ENCODE measurements at regions of chr10 and their contacts with region 1.

Region 1: GRCh38 chr10:15097011-15097812 is at the start of gene RPP38:
- DNase-seq: peak; percentile 85
- ATAC-seq: peak; percentile 85
- H3K4me3 ChIP-seq: peak within 1 kb of the TSS; percentile 94
- H3K27ac ChIP-seq: peak within 1 kb of the TSS; percentile 94
- H3K4me1 ChIP-seq: no peaks in the 10 kb centered on the region; the same call in 1 of the 2 replicates
- H3K27me3 ChIP-seq: no peaks in the 10 kb centered on the region
- CTCF ChIP-seq: no peak
- total RNA-seq, gene RPP38: 8.5 and 9.9 TPM in 2 replicates

Region 2: DNA sequence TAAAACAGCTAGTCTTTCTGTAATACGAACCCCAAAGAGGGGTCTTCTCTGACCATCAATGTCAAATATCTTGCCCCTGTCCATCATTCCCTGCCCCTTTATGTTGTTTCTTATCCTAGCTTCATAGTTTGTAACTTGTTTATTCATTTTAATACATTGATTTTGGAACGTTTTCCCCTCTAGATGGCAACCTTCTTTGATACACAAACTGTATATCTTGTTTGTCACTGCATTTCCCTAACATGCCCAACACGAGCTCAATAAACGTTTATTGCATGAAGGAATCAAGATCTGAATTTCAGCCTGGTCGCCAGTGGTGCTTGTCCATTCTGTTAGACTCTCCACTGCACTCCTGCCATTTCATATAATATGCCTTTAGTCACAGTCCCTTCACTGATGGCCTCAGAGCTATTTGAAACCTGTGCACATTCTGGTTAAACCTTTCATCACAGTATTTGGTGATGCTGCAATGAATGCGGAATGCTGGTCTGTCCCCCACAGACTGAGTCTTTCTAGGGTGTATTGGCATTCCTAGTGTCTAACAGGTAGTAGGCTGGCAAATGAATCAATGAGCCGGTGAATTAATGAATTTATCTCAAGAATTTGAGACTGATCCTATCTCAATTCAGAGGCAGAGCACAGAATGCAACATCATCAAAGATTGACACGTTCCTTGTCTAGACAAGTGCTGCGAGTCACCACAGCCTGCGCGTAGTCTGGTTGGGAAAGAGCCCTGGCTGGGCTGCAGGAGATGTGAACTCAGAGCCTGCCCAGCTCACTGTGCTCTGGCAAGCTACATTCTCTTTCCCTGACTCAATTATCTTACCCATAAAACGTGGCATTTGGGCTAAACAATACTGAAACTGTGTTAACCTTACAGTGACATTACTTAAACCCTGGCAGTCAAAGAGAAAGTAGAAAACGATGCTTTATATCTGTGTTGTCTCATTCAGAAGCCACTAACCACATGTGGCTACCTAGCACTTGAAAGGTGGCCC is 711.3 kb before region 1 on chr10:
- CTCF ChIA-PET with region 1: interaction called, 11 read pairs
- POLR2A ChIA-PET with region 1: no interaction called
- intact Hi-C with region 1: no loop called
- DNase-seq: peak; percentile 36
- ATAC-seq: no peak
- H3K4me3 ChIP-seq: no peak overlapping the region
- H3K27ac ChIP-seq: no peak overlapping the region
- H3K4me1 ChIP-seq: no peaks in the 10 kb centered on the region
- H3K27me3 ChIP-seq: no peaks in the 10 kb centered on the region
- CTCF ChIP-seq: no peak; the same call in 1 of the 2 replicates

Region 3: GRCh38 chr10:14926722-14927416 is 170.3 kb before region 1 on chr10:
- CTCF ChIA-PET with region 1: no interaction called
- POLR2A ChIA-PET with region 1: no interaction called
- intact Hi-C with region 1: no loop called
- DNase-seq: no peak
- ATAC-seq: no peak
- H3K4me3 ChIP-seq: no peak overlapping the region
- H3K27ac ChIP-seq: no peak overlapping the region
- H3K4me1 ChIP-seq: no peaks in the 10 kb centered on the region
- H3K27me3 ChIP-seq: no peaks in the 10 kb centered on the region
- CTCF ChIP-seq: no peak

Region 4: DNA sequence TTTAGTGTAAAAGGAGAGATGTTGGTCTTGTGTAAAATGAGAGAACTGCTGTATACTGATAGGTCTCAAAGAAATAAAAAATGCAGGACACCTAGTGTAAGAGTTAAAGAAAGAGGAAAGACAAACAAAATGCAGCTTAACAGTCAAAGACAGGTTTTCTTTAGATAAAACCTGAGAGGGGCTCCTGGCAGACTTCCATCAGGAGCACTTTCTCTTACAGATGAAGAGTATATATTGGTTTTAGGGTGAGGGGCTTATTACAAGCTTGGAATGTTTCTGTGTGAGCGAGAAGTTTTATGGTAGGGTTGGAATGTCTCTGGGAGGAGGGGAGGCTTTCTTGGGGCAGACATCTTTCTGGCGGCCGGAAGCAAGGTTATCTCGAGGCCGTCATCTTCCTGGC is 24.9 kb before region 1 on chr10:
- CTCF ChIA-PET with region 1: no interaction called
- POLR2A ChIA-PET with region 1: no interaction called
- intact Hi-C with region 1: no loop called
- DNase-seq: no peak
- ATAC-seq: no peak
- H3K4me3 ChIP-seq: no peak overlapping the region
- H3K27ac ChIP-seq: no peak overlapping the region
- H3K4me1 ChIP-seq: no peaks in the 10 kb centered on the region
- H3K27me3 ChIP-seq: no peaks in the 10 kb centered on the region
- CTCF ChIP-seq: no peak